ENCODE measurements at regions of chr21 and their contacts with region 1.

Region 1: GRCh38 chr21:42258153-42258884 is 39.4 kb downstream of the ABCG1 start:
- DNase-seq: peak; percentile 82 to 89 (median 88)
- ATAC-seq: peak; percentile 88
- H3K4me3 ChIP-seq: no peak overlapping the region
- H3K4me1 ChIP-seq: peaks cover 2% of the 10 kb centered on the region
- CTCF ChIP-seq: peak; percentile 90

Region 2: DNA sequence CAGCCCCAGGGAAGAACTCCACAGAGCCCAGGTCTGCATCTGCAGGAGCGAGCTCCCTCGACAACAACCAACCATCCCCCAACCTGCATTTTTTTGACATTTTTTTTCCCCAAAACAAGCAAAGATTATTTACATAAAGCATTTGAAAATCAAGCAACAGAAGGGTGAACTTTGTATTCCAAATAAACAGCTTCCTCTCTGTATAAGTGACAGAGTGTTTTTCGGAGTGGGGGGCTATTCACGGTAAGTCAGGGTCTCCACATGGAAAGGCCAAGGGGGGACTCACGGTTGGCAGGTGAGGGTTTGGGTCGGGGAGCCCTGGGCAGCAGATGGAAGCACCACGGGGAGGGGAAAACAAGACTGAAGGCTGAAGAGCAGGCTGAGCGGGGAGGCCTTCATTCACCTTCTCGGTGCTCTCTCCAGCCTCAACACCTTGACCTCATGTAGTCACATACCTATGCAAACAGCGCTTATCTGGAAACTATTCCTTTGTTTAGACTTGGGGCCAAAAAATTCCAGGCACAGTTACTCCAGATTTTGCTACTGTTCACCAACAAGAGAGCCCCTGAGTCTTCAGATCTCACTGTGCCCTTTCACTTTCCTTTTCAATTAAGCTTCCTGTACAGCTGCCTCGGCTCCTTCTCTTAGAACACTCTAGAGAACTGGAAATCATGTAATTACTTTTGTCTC is 332.1 kb before region 1 on chr21:
- intact Hi-C with region 1: no loop called
- DNase-seq: peak in 2 of 3 donors; percentile 49 to 63
- ATAC-seq: peak; percentile 93
- H3K4me3 ChIP-seq: peak overlapping the region; percentile 1
- H3K4me1 ChIP-seq: peaks cover 20% of the 10 kb centered on the region
- CTCF ChIP-seq: no peak

Region 3: DNA sequence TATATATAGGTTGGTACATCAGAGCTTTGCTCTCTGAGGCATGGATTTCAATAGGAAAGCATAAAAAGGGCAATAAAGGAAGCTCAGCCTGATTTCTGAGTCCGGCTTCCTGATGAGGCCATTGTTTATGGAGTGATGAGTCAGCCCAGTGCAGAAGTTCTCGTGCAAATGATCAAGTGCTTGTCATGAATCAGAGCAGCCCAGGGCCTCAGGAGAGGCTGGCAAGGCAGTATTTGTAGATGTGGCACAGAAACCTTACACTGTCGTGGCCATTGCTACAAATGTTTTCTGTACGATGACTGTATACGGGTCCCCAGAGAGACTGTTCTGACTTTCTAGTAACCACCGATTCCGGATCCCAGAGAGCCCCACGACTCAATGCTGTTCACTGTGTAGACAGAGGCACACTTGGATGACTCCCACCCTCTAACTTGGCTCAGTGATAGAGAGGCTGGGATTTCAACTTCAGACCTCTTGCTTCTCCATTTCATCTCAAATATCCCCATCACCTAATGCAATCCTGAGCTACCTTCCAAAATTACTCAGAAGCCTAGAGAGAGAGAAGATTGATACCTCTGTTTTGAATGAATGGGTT is 160.4 kb before region 1 on chr21:
- intact Hi-C with region 1: no loop called
- DNase-seq: peak; percentile 57 to 76 (median 65)
- ATAC-seq: peak; percentile 91
- H3K4me3 ChIP-seq: no peak overlapping the region
- H3K4me1 ChIP-seq: peaks cover 35% of the 10 kb centered on the region
- CTCF ChIP-seq: no peak

Region 4: GRCh38 chr21:42156690-42157577 is 101.4 kb before region 1 on chr21:
- intact Hi-C with region 1: loop called (anchors 5 to 10 kb)
- DNase-seq: peak in 1 of 3 donors; percentile 39
- ATAC-seq: peak; percentile 11
- H3K4me3 ChIP-seq: no peak overlapping the region
- H3K4me1 ChIP-seq: no peaks in the 10 kb centered on the region
- CTCF ChIP-seq: no peak

Region 5: GRCh38 chr21:42164064-42164789 is 94.1 kb before region 1 on chr21:
- intact Hi-C with region 1: loop called (anchors 5 to 10 kb)
- DNase-seq: peak; percentile 80 to 90 (median 85)
- ATAC-seq: peak; percentile 90
- H3K4me3 ChIP-seq: no peak overlapping the region
- H3K4me1 ChIP-seq: peaks cover 15% of the 10 kb centered on the region
- CTCF ChIP-seq: peak; percentile 58

Measured in mucosa of descending colon (tissue), 3 donors.